Heart right ventricle (tissue), 16 donors: ENCODE measurements at regions of chr10 and their contacts with region 1.

Region 1: DNA sequence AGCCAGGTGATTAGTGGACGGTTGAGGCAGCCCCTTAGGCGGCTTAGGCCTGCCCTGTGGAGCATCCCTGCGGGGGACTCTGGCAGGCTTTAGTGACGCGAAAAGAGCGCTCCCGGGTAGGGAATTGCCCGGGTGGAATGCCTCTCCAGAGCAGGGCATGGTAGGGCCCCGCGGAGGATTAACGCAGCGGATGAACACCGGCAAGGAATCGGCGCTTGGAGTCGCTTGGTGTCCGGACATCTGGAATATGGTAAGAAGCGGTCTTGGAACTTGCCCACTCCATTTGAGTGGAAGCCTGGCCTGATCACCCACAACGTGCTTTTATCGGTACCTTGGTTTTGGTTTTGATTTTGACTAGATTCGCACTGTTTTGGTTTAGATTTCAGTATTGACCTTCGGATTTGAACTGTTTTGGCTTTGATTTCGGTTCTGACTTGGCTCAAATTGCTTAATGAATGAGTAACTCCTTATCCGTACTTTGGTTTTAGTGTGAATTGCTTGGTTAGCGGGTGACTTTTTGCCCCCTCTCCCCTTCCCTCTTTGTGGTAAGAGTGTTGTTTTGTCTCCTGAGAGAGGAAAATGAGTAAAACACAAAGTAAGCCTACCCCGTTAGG is 24.2 kb upstream of the CHST3 start:
- DNase-seq: no peak
- ATAC-seq: no peak
- H3K4me3 ChIP-seq: no peak overlapping the region
- H3K27ac ChIP-seq: no peak overlapping the region
- H3K4me1 ChIP-seq: no peaks in the 10 kb centered on the region
- H3K27me3 ChIP-seq: no peaks in the 10 kb centered on the region
- CTCF ChIP-seq: no peak

Region 2: GRCh38 chr10:71909399-71910083 is 30.4 kb before region 1 on chr10:
- intact Hi-C with region 1: loop called in 1 of 10 experiments (anchors 5 kb)
- DNase-seq: no peak
- ATAC-seq: no peak
- H3K4me3 ChIP-seq: no peak overlapping the region
- H3K27ac ChIP-seq: no peak overlapping the region
- H3K4me1 ChIP-seq: peaks cover 0 to 22% (median 5%) of the 10 kb centered on the region in 9 donors
- H3K27me3 ChIP-seq: no peaks in the 10 kb centered on the region
- CTCF ChIP-seq: no peak